ENCODE measurements at regions of chr7 and their contacts with region 1.

Region 1: GRCh38 chr7:47337531-47337930 is 244.4 kb downstream of the TNS3 start:
- DNase-seq: peak in 4 of 5 donors; percentile 40 to 70 (median 58)
- ATAC-seq: peak; percentile 54 to 72 (median 66)
- H3K4me3 ChIP-seq: no peak overlapping the region
- H3K27ac ChIP-seq: peak overlapping the region in 9 of 12 donors; percentile 2 to 87 (median 73)
- H3K4me1 ChIP-seq: peaks cover 0 to 47% (median 17%) of the 10 kb centered on the region in 12 donors
- H3K27me3 ChIP-seq: no peaks in the 10 kb centered on the region
- CTCF ChIP-seq: peak in 7 of 12 donors; percentile 9 to 43 (median 25)
- POLR2A ChIP-seq: no peak

Region 2: DNA sequence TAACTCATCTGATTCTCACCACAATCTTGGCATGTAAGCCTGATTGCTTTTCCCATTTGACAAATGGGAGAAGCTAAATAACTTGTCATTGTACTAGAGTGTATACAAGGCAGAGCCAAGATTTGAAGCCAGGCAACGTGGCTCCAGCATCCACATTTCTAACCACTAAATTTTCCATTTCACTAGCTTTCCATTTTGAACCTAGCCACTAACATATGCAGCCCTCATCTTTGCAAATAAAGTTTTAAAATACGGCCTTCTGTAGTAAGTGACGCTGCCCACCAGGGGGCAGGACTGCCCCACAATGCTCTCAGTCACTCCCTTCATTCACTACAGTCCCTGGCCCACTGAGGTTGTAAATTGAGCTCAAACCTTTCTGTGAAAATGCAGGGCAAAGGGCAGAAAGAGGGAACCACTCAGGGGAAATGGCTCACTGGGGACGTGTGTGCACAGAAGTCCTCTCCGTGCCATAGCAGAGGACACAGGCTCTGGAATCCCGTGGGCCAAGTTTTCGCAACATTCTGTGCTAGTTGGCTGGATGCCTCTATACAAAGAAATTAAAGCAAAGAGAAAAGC is 71.3 kb before region 1 on chr7:
- intact Hi-C with region 1: loop called in 3 of 10 experiments (anchors 5 kb)
- DNase-seq: peak in 4 of 5 donors; percentile 43 to 53 (median 48)
- ATAC-seq: peak; percentile 56 to 85 (median 78)
- H3K4me3 ChIP-seq: no peak overlapping the region
- H3K27ac ChIP-seq: peak overlapping the region in 3 of 12 donors; percentile 9 to 38 (median 13)
- H3K4me1 ChIP-seq: peaks cover 0 to 13% (median 2%) of the 10 kb centered on the region in 12 donors
- H3K27me3 ChIP-seq: no peaks in the 10 kb centered on the region
- CTCF ChIP-seq: peak; percentile 87 to 95 (median 91)
- POLR2A ChIP-seq: no peak

Region 3: DNA sequence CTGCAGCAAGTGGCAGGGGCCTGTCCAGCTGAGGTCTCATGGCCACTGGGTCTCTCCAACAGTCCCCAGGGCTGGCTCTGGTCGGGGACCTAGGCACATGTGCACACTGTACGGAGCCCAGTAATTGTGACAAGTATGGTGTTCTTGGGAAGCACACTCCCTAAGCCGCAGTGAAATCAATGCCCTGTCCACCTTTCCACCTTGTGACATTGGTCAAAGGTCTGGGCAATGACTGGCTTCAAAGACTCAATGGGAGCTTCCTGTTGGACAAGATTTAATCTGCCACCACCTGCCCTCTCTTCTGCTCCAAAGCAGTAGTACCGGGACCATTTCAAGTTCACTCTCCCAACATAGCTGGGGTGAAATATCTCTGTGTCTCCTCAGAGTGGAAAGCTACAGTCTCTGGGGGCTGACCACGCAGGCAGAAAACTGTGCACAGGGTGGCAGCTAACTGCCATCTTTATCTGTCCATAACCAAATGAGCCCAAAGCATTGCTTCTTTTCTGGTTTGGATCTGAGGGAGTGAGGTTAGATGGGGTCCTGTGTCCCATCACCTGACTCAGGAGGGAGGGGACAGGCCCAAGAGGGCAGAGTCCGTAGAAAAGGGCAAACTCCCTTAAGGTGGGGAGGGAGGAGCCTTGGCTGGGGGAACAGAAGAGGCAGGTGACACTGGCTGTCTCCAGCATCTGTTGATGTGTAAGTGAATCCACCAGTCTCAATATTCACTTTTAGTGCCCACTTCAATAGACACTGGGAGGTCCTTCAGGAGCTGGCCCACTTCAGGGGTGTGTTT is 63.4 kb before region 1 on chr7:
- intact Hi-C with region 1: loop called in 4 of 10 experiments (anchors 5 kb)
- DNase-seq: no peak
- ATAC-seq: no peak
- H3K4me3 ChIP-seq: no peak overlapping the region
- H3K27ac ChIP-seq: no peak overlapping the region
- H3K4me1 ChIP-seq: peaks cover 0 to 5% (median 0%) of the 10 kb centered on the region in 12 donors
- H3K27me3 ChIP-seq: no peaks in the 10 kb centered on the region
- CTCF ChIP-seq: no peak
- POLR2A ChIP-seq: no peak

Region 4: DNA sequence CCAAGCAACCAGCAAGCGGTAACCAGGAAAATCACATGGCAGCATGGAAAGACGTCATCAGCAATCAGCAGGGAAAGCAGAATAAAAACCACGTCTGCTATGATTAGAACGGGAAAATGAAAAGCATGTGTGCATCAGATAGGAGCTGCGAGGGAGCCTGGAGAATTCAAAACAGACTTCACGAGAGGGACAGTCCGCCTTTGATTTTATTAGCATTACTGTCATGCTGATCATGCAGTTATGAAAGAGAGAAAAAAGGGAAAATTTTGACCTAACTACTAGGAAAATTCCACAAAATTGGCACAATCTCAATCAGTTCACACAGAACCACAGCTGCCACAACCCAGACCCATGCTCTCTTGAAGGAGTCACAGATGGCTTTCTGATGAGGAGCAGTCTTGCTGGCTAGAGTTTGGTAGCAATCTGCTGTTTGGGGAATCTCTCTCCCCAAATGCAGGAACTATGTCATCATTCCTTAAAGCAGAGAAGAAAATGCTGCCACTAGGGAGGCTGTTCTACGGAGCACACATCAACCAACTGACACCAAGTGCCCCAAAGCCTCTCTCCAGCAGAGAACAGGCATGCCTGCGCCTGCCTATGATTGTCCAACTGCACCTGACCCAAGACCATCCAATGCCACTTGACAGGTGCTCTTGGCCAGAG is 51.5 kb before region 1 on chr7:
- intact Hi-C with region 1: loop called in 1 of 10 experiments (anchors 5 kb)
- DNase-seq: no peak
- ATAC-seq: peak; percentile 27 to 72 (median 52)
- H3K4me3 ChIP-seq: no peak overlapping the region
- H3K27ac ChIP-seq: peak overlapping the region in 10 of 12 donors; percentile 6 to 57 (median 46)
- H3K4me1 ChIP-seq: peaks cover 0 to 26% (median 11%) of the 10 kb centered on the region in 12 donors
- H3K27me3 ChIP-seq: no peaks in the 10 kb centered on the region
- CTCF ChIP-seq: peak in 5 of 12 donors; percentile 15 to 39 (median 25)
- POLR2A ChIP-seq: no peak

Region 5: DNA sequence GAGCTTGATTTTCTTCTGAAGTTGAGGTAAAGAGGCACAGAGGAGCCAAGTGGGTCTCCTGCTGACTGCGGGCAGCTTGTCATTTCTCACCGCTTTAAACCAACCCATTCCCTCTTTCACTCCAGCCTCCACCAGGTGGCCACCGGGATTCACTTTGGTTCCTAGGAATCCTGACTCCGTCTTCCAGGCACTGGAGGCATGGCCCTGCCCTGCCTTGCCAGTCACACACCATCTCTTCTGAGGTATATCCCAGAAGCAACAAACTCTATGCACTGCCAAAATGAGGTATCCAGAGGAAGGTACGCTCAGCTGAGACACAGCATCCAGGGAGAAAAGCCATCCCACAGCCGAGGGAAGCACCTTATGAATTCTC is 36.4 kb before region 1 on chr7:
- intact Hi-C with region 1: loop called in 2 of 10 experiments (anchors 2 to 5 kb)
- DNase-seq: no peak
- ATAC-seq: no peak
- H3K4me3 ChIP-seq: no peak overlapping the region
- H3K27ac ChIP-seq: peak overlapping the region in 1 of 12 donors; percentile 31
- H3K4me1 ChIP-seq: peaks cover 0 to 33% (median 13%) of the 10 kb centered on the region in 12 donors
- H3K27me3 ChIP-seq: no peaks in the 10 kb centered on the region
- CTCF ChIP-seq: no peak
- POLR2A ChIP-seq: no peak

Region 6: GRCh38 chr7:47371729-47372368 is 34.3 kb after region 1 on chr7:
- intact Hi-C with region 1: loop called in 2 of 10 experiments (anchors 5 kb)
- DNase-seq: peak; percentile 83 to 91 (median 85)
- ATAC-seq: peak; percentile 80 to 89 (median 88)
- H3K4me3 ChIP-seq: no peak overlapping the region
- H3K27ac ChIP-seq: peak overlapping the region in 6 of 12 donors; percentile 21 to 51 (median 33)
- H3K4me1 ChIP-seq: peaks cover 0 to 62% (median 35%) of the 10 kb centered on the region in 12 donors
- H3K27me3 ChIP-seq: no peaks in the 10 kb centered on the region
- CTCF ChIP-seq: no peak
- POLR2A ChIP-seq: no peak

Region 7: GRCh38 chr7:47379629-47380324 is 42.2 kb after region 1 on chr7:
- intact Hi-C with region 1: loop called in 2 of 10 experiments (anchors 5 kb)
- DNase-seq: peak; percentile 77 to 93 (median 85)
- ATAC-seq: peak; percentile 90 to 94 (median 92)
- H3K4me3 ChIP-seq: peak overlapping the region in 5 of 12 donors; percentile 9 to 32 (median 24)
- H3K27ac ChIP-seq: peak overlapping the region; percentile 29 to 90 (median 74)
- H3K4me1 ChIP-seq: peaks cover 0 to 49% (median 29%) of the 10 kb centered on the region in 12 donors
- H3K27me3 ChIP-seq: no peaks in the 10 kb centered on the region
- CTCF ChIP-seq: peak in 1 of 12 donors; percentile 14
- POLR2A ChIP-seq: no peak

Measured in heart left ventricle (tissue), 16 donors.